WTC11 (cell line): ENCODE measurements at regions of chr19 and their contacts with region 1.

Region 1: DNA sequence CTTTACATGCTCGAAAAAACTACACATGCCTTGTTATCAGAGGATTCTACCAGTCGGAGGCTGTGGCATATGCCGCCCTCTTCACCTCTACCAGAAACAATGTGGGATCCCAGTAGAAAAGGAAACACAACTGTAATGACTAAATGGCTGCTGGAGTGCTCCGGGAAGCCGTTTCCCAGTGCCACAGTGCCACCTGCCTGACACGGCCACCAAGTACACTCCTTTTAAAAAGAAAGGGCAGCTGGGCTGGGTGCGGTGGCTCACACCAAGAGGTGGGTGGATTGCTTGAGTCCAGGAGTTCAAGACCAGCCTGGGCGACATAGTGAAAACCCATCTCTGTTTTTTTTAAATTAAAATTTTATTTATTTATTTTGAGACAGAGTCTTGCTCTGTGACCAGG is 67.3 kb downstream of the TRPM4 start:
- DNase-seq: peak; percentile 79
- ATAC-seq: peak; percentile 82
- H3K4me3 Mint-ChIP-seq: no peak overlapping the region
- H3K27ac Mint-ChIP-seq: no peak overlapping the region
- H3K4me1 Mint-ChIP-seq: peaks cover 2% of the 10 kb centered on the region; the same call in 1 of the 2 replicates
- H3K27me3 Mint-ChIP-seq: peaks cover 8% of the 10 kb centered on the region
- CTCF ChIP-seq: peak; percentile 43

Region 2: DNA sequence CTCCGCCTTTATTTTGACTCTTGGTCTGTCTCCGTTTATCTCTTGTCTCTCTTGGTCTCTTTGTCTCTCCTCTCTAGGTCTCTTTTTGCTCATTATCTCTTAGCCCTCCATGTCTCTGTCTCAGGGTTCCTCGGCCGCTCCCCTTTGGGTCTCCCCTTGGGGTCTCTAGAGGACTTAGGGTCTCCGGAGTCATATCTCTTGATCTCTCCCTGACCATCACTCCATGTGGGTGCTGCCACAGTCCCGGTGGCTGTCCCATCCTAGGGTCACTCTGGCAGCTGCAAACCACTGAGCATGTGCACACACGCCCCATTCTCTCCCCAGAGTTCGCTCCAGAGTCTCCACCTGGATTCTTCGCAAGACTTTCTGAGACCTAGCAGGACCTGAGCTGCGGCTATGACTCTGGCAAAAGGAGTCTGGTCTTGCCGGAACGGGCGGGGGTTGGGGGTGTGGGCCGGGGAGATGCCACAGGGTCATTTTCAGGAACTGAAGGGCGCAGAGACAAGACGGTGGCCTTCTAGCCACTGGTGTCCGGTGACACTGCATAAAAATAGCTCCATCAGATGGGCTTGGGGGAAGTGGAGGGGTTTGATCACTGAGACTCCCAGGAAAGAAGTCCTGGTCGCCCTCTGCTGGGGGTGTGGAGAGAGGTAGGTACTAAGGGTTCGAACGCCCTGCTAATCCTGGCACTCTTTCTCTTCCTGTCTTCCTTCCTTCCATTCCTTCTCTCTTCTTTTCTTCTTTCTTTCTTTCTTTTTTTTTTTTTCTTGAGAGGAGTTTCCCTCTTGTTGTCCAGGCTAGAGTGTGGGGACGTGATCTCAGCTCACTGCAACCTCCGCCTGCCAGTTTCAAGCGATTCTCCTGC is 151.1 kb before region 1 on chr19:
- CTCF ChIA-PET with region 1: interaction called, 14 read pairs
- POLR2A ChIA-PET with region 1: no interaction called
- DNase-seq: peak; percentile 68
- ATAC-seq: peak; percentile 23; the same call in 1 of the 2 replicates
- H3K4me3 Mint-ChIP-seq: peak overlapping the region; percentile 68
- H3K27ac Mint-ChIP-seq: no peak overlapping the region
- H3K4me1 Mint-ChIP-seq: peaks cover 8% of the 10 kb centered on the region; the same call in 1 of the 2 replicates
- H3K27me3 Mint-ChIP-seq: peaks cover 78% of the 10 kb centered on the region
- CTCF ChIP-seq: no peak; the same call in 1 of the 2 replicates

Region 3: DNA sequence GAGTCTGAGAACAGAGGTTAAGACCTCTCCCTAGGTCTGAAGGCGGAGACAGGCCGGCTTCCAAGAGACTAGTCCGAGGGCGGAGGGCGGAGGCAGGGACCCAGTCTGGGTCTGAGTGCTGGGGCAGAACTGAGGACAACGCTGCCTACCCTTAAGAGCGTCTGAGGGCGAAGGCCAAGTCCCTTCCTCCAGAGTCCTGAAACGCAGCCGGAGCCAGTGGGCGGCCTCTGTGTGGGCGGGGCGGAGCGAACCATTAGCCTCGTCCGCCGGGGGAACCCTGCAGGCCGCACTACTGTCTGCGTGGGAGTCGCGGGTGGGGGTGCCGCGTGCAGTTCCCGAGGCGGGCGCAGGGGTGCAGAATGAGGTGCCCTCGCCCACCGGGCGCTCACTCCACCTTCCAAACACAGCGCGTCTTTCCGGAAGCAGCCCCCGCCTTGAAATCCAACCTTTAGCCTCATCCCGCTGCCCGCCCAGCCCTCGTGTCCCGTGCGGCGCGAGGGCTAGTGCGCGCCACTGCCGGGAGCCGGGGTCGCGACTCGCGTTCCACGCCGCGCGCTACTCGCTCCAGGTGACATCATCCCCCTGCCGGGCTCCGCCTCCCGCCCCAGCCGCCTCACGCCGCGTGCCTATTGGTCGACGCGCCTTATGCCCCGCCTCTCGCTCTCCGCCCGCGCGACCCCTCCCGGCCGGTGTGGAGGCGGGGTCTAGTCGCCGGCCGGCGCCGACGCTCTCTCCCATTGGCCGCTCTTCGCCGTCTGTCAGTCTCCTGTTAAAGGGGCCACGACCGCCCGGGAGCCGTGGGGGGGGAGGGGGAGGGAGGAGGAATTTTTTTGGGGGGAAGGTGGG is 106.1 kb before region 1 on chr19 and contains the start of gene C19orf73:
- CTCF ChIA-PET with region 1: interaction called, 14 read pairs
- POLR2A ChIA-PET with region 1: no interaction called
- DNase-seq: peak; percentile 94
- ATAC-seq: peak; percentile 81
- H3K4me3 Mint-ChIP-seq: peak within 1 kb of the TSS; percentile 75
- H3K27ac Mint-ChIP-seq: peak within 1 kb of the TSS; percentile 61
- H3K4me1 Mint-ChIP-seq: peaks cover 14% of the 10 kb centered on the region
- H3K27me3 Mint-ChIP-seq: peaks cover 64% of the 10 kb centered on the region
- CTCF ChIP-seq: no peak
- total RNA-seq, gene C19orf73: 3.1 to 3.4 TPM (median 3.2 TPM) in 3 replicates

Region 4: GRCh38 chr19:49148784-49149651 is 75.8 kb before region 1 on chr19:
- CTCF ChIA-PET with region 1: interaction called, 10 read pairs
- POLR2A ChIA-PET with region 1: no interaction called
- DNase-seq: peak; percentile 100
- ATAC-seq: peak; percentile 57
- H3K4me3 Mint-ChIP-seq: peak overlapping the region; percentile 92
- H3K27ac Mint-ChIP-seq: peak overlapping the region; percentile 91
- H3K4me1 Mint-ChIP-seq: peaks cover 33% of the 10 kb centered on the region
- H3K27me3 Mint-ChIP-seq: peaks cover 42% of the 10 kb centered on the region
- CTCF ChIP-seq: no peak

Region 5: GRCh38 chr19:49301165-49301865 is 76.5 kb after region 1 on chr19:
- CTCF ChIA-PET with region 1: interaction called, 13 read pairs
- POLR2A ChIA-PET with region 1: no interaction called
- DNase-seq: peak; percentile 93
- ATAC-seq: peak; percentile 100
- H3K4me3 Mint-ChIP-seq: no peak overlapping the region
- H3K27ac Mint-ChIP-seq: no peak overlapping the region
- H3K4me1 Mint-ChIP-seq: peaks cover 2% of the 10 kb centered on the region; the same call in 1 of the 2 replicates
- H3K27me3 Mint-ChIP-seq: peaks cover 9% of the 10 kb centered on the region
- CTCF ChIP-seq: peak; percentile 97

Region 6: GRCh38 chr19:49327878-49328544 is 103.2 kb after region 1 on chr19:
- CTCF ChIA-PET with region 1: interaction called, 13 read pairs
- POLR2A ChIA-PET with region 1: no interaction called
- DNase-seq: peak; percentile 62
- ATAC-seq: peak; percentile 79
- H3K4me3 Mint-ChIP-seq: no peak overlapping the region
- H3K27ac Mint-ChIP-seq: no peak overlapping the region
- H3K4me1 Mint-ChIP-seq: peaks cover 2% of the 10 kb centered on the region; the same call in 1 of the 2 replicates
- H3K27me3 Mint-ChIP-seq: peaks cover 22% of the 10 kb centered on the region
- CTCF ChIP-seq: peak; percentile 67

Region 7: DNA sequence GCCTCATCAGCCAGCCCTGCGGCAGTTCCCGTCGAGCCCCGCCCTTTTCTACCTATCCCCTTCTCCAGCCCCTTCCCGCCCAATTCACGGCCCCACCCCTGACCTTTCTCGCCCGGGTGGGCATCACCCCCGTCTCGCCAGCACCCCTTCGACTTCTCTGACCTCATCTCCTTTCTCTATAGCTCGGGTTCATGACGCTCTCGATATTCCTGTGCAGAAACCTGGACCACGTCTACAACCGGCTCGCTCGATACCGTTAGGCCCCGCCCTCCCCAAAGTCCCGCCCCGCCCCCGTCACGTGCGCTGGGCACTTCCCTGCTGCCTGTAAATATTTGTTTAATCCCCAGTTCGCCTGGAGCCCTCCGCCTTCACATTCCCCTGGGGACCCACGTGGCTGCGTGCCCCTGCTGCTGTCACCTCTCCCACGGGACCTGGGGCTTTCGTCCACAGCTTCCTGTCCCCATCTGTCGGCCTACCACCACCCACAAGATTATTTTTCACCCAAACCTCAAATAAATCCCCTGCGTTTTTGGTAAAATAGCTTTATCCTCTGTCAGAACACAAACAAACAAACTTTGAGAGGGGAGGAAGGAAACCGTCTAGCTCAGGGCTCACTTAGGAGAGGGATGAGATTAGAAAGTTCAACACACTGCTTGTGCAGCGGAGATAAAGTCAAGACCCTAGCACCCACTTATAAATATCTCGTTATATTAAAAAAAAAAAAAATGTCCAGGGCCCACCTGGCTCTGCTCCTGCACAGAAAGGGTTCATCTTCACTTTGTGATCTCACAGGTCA is 115.4 kb after region 1 on chr19:
- CTCF ChIA-PET with region 1: interaction called, 11 read pairs
- POLR2A ChIA-PET with region 1: no interaction called
- DNase-seq: peak; percentile 60
- ATAC-seq: no peak
- H3K4me3 Mint-ChIP-seq: peak overlapping the region; percentile 32; the same call in 1 of the 2 replicates
- H3K27ac Mint-ChIP-seq: peak overlapping the region; percentile 67; the same call in 1 of the 2 replicates
- H3K4me1 Mint-ChIP-seq: peaks cover 23% of the 10 kb centered on the region
- H3K27me3 Mint-ChIP-seq: peaks cover 35% of the 10 kb centered on the region
- CTCF ChIP-seq: no peak

Region 8: GRCh38 chr19:49374665-49375434 is 150.0 kb after region 1 on chr19:
- CTCF ChIA-PET with region 1: no interaction called
- POLR2A ChIA-PET with region 1: no interaction called
- DNase-seq: no peak
- ATAC-seq: no peak
- H3K4me3 Mint-ChIP-seq: no peak overlapping the region
- H3K27ac Mint-ChIP-seq: no peak overlapping the region
- H3K4me1 Mint-ChIP-seq: peaks cover 5% of the 10 kb centered on the region; the same call in 1 of the 2 replicates
- H3K27me3 Mint-ChIP-seq: peaks cover 29% of the 10 kb centered on the region
- CTCF ChIP-seq: no peak